Dorsolateral prefrontal cortex (tissue), 120 donors: ENCODE measurements at regions of chr5 and their contacts with region 1.

Region 1: DNA sequence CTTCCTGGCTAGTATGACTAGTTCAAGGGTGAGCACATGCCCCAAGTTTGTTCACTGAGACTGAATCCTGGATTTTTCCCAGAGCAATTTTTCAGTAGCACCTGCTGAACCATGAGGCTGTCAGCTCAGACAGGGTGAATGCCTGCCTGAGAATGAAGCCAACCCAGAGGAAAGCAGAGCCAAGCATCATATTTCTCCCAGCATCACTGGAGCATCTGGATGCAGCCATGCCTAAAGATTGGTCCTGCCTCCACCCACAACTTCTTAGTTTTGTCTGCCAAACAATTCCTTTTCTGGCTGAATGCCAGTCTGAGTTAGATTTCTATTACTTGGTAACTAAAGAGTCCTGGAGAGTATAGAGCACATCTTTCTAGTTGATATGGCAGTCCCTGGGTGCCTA is 343.6 kb downstream of the CSNK1G3 start:
- DNase-seq: no peak
- H3K4me3 ChIP-seq: no peak overlapping the region
- H3K27ac ChIP-seq: no peak overlapping the region
- H3K27me3 ChIP-seq: no peaks in the 10 kb centered on the region
- CTCF ChIP-seq: no peak

Region 2: DNA sequence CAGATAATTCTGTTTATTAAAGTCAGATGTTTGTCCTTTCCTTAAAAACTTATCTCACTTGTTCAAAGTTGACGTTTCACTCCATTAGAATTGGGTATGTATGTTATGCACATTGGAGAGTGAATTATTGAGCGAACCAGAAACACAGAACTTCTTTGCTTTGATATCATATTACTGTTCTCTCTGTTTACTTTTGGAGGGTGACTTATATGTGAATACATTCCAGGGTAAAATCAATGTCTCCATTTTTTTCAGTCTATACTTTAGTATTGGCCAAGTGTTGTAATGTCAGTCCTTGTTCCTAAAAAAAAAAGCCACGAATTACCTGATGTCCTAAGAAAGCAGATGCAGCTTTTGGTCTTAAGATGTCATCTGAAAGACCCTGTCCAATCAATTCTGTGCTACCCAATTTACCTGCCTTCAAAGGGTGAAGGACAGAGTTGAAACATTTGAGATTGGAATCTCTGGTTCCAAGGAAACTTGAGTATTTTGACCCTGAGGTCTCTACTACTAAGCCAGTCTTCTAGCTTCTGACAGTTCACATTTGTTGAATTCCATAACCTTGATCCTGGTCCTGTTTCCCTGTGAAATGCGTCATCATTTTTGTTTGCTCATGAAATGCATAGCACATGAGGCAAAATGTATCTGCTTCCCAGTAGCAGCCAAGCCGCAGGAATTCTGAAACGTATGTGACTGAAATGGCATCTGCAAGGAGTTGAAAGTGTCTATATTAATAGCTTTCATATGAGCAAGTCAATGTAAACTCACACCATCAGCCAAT is 36.0 kb before region 1 on chr5:
- intact Hi-C with region 1: loop called in 1 of 2 experiments (anchors 5 kb)
- DNase-seq: no peak
- H3K4me3 ChIP-seq: no peak overlapping the region
- H3K27ac ChIP-seq: no peak overlapping the region
- H3K27me3 ChIP-seq: no peaks in the 10 kb centered on the region
- CTCF ChIP-seq: no peak